Naive thymus-derived CD4-positive, alpha-beta T cell (primary cell): ENCODE measurements at regions of chr18 and their contacts with region 1.

Region 1: GRCh38 chr18:42053188-42053781 is 98.3 kb downstream of the PIK3C3 start:
- DNase-seq: peak in 8 of 9 donors; percentile 16 to 53 (median 40)
- ATAC-seq: peak; percentile 91
- H3K4me3 ChIP-seq: no peak overlapping the region
- H3K4me3 Mint-ChIP-seq: peak overlapping the region in 4 of 10 donors; percentile 5 to 25 (median 16)
- H3K27ac ChIP-seq: no peak overlapping the region
- H3K27ac Mint-ChIP-seq: peak overlapping the region in 1 of 9 donors; percentile 42
- H3K4me1 ChIP-seq: no peaks in the 10 kb centered on the region
- H3K4me1 Mint-ChIP-seq: peaks cover 4 to 16% (median 14%) of the 10 kb centered on the region in 7 donors
- H3K27me3 ChIP-seq: no peaks in the 10 kb centered on the region
- H3K27me3 Mint-ChIP-seq: no peaks in the 10 kb centered on the region

Region 2: GRCh38 chr18:41954827-41955613 is 98.3 kb before region 1 on chr18 and contains the start of gene PIK3C3:
- CTCF ChIA-PET with region 1: interaction called, 3 read pairs
- POLR2A ChIA-PET with region 1: no interaction called
- intact Hi-C with region 1: loop called in 1 of 2 experiments (anchors 5 kb)
- DNase-seq: peak; percentile 90 to 97 (median 95)
- ATAC-seq: peak; percentile 96
- H3K4me3 ChIP-seq: peak within 1 kb of the TSS; percentile 80
- H3K4me3 Mint-ChIP-seq: peak within 1 kb of the TSS; percentile 96 to 100 (median 100)
- H3K27ac ChIP-seq: peak within 1 kb of the TSS; percentile 91
- H3K27ac Mint-ChIP-seq: peak within 1 kb of the TSS; percentile 97 to 100 (median 99)
- H3K4me1 ChIP-seq: peaks cover 28 to 31% of the 10 kb centered on the region in 2 donors
- H3K4me1 Mint-ChIP-seq: peaks cover 26 to 50% (median 42%) of the 10 kb centered on the region in 7 donors
- H3K27me3 ChIP-seq: no peaks in the 10 kb centered on the region
- H3K27me3 Mint-ChIP-seq: peaks cover 0 to 6% (median 0%) of the 10 kb centered on the region in 5 donors
- total RNA-seq, gene PIK3C3: 47.4 to 76.9 (median 59.7) TPM

Region 3: GRCh38 chr18:42114310-42114943 is 61.1 kb after region 1 on chr18:
- CTCF ChIA-PET with region 1: interaction called, 7 read pairs
- POLR2A ChIA-PET with region 1: no interaction called
- intact Hi-C with region 1: loop called in 1 of 2 experiments (anchors 1 kb)
- DNase-seq: peak; percentile 7 to 57 (median 49)
- ATAC-seq: peak; percentile 79
- H3K4me3 ChIP-seq: no peak overlapping the region
- H3K4me3 Mint-ChIP-seq: peak overlapping the region in 6 of 10 donors; percentile 23 to 46 (median 44)
- H3K27ac ChIP-seq: no peak overlapping the region
- H3K27ac Mint-ChIP-seq: peak overlapping the region in 2 of 9 donors; percentile 15 to 43
- H3K4me1 ChIP-seq: peaks cover 0 to 4% of the 10 kb centered on the region in 2 donors
- H3K4me1 Mint-ChIP-seq: peaks cover 0 to 13% (median 12%) of the 10 kb centered on the region in 7 donors
- H3K27me3 ChIP-seq: no peaks in the 10 kb centered on the region
- H3K27me3 Mint-ChIP-seq: peaks cover 0 to 20% (median 0%) of the 10 kb centered on the region in 5 donors

Region 4: GRCh38 chr18:42274488-42275137 is 221.3 kb after region 1 on chr18:
- CTCF ChIA-PET with region 1: no interaction called
- POLR2A ChIA-PET with region 1: no interaction called
- intact Hi-C with region 1: loop called (anchors 1 kb)
- DNase-seq: peak in 1 of 9 donors; percentile 3
- ATAC-seq: no peak
- H3K4me3 ChIP-seq: no peak overlapping the region
- H3K4me3 Mint-ChIP-seq: no peak overlapping the region
- H3K27ac ChIP-seq: no peak overlapping the region
- H3K27ac Mint-ChIP-seq: no peak overlapping the region
- H3K4me1 ChIP-seq: no peaks in the 10 kb centered on the region
- H3K4me1 Mint-ChIP-seq: peaks cover 0 to 2% (median 0%) of the 10 kb centered on the region in 7 donors
- H3K27me3 ChIP-seq: no peaks in the 10 kb centered on the region
- H3K27me3 Mint-ChIP-seq: peaks cover 0 to 4% (median 0%) of the 10 kb centered on the region in 5 donors

Region 5: GRCh38 chr18:43271593-43272432 is 1218.5 kb after region 1 on chr18:
- CTCF ChIA-PET with region 1: no interaction called
- POLR2A ChIA-PET with region 1: no interaction called
- intact Hi-C with region 1: loop called in 1 of 2 experiments (anchors 2 kb)
- DNase-seq: peak in 5 of 9 donors; percentile 2 to 16 (median 5)
- ATAC-seq: peak; percentile 46
- H3K4me3 ChIP-seq: no peak overlapping the region
- H3K4me3 Mint-ChIP-seq: no peak overlapping the region
- H3K27ac ChIP-seq: no peak overlapping the region
- H3K27ac Mint-ChIP-seq: no peak overlapping the region
- H3K4me1 ChIP-seq: no peaks in the 10 kb centered on the region
- H3K4me1 Mint-ChIP-seq: peaks cover 0 to 4% (median 0%) of the 10 kb centered on the region in 7 donors
- H3K27me3 ChIP-seq: no peaks in the 10 kb centered on the region
- H3K27me3 Mint-ChIP-seq: peaks cover 0 to 15% (median 6%) of the 10 kb centered on the region in 5 donors

Region 6: GRCh38 chr18:43587538-43588153 is 1534.4 kb after region 1 on chr18:
- CTCF ChIA-PET with region 1: no interaction called
- POLR2A ChIA-PET with region 1: no interaction called
- intact Hi-C with region 1: loop called in 1 of 2 experiments (anchors 10 kb)
- DNase-seq: no peak
- ATAC-seq: no peak
- H3K4me3 ChIP-seq: no peak overlapping the region
- H3K4me3 Mint-ChIP-seq: no peak overlapping the region
- H3K27ac ChIP-seq: no peak overlapping the region
- H3K27ac Mint-ChIP-seq: no peak overlapping the region
- H3K4me1 ChIP-seq: no peaks in the 10 kb centered on the region
- H3K4me1 Mint-ChIP-seq: no peaks in the 10 kb centered on the region
- H3K27me3 ChIP-seq: no peaks in the 10 kb centered on the region
- H3K27me3 Mint-ChIP-seq: no peaks in the 10 kb centered on the region

Region 7: DNA sequence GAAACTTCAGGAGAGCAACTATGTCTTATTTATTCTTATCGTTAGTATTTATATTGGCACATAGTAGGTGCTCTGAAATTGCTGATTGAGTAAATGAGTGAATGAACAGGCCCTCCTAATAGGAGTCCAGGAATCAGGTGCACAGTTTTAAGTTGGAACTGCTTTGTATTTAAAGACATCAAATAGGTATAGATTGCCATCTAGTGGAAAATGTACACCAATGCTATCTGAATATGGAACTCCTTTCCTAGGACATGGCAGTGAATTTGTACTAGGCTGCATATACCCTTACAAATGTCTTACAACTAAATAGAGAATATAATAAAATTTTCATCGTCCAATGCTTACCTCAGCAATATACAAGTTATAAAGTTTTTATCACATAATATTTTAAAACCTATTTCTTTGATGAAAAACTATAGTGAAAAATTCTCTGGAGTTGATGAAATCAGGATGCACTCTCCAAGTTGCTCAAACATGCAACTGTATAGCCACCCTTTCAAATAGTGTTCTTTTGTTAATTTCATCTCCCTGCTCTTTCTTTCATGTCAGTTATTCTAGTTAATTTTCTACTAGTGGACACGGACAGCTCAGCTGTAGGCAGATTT is 1542.9 kb after region 1 on chr18:
- CTCF ChIA-PET with region 1: no interaction called
- POLR2A ChIA-PET with region 1: no interaction called
- intact Hi-C with region 1: loop called in 1 of 2 experiments (anchors 2 kb)
- DNase-seq: no peak
- ATAC-seq: no peak
- H3K4me3 ChIP-seq: no peak overlapping the region
- H3K4me3 Mint-ChIP-seq: no peak overlapping the region
- H3K27ac ChIP-seq: no peak overlapping the region
- H3K27ac Mint-ChIP-seq: no peak overlapping the region
- H3K4me1 ChIP-seq: no peaks in the 10 kb centered on the region
- H3K4me1 Mint-ChIP-seq: no peaks in the 10 kb centered on the region
- H3K27me3 ChIP-seq: no peaks in the 10 kb centered on the region
- H3K27me3 Mint-ChIP-seq: peaks cover 0 to 9% (median 0%) of the 10 kb centered on the region in 5 donors